ENCODE measurements at regions of chr4 and their contacts with region 1.

Region 1: DNA sequence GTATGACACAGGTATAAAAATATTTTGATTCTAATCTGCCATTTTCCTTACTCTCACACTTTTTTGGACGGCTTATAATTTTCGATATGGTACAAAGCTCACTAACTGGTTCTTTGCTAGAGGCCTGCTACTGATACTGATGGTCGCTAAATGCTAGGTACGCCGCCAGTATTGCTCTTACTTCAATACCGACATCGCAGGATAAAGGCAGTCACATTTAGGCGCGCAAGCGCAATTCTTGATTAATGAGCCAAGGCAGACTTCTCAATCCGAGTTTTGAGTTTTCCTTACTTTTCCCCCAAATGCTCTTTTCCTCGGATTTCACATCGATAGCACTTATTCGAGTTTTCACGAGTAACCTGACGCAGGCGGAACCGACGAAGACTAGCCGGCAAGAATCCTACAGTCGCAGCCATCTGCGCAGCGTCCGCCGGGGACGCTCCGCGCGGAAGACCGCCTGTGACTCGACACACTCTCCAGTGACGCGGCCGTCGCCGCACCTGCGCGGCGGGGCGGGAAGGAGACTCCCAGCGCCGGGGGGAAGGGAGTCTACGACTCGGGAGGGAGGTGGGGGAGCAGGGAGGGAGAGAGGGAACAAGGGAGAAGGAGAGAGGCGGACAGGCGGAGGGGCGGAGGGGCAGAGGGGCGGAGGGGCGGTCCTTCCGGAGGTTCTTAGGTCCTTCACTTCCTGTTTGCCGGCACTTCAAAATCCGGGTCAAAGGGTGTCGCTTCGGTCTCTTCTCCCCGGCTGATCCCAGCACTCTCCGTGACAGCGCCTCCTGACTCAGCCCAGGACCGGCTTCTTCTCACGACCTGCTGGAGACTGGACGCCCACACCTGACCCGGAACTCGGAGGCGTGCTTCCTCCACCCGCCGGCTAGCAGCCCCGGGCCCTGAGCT is at the start of gene USP38:
- DNase-seq: peak; percentile 91 to 96
- ATAC-seq: peak; percentile 89 to 96 (median 92)
- H3K4me3 ChIP-seq: peak within 1 kb of the TSS; percentile 96
- H3K27ac ChIP-seq: peak within 1 kb of the TSS; percentile 98
- H3K4me1 ChIP-seq: peaks cover 22% of the 10 kb centered on the region
- H3K27me3 ChIP-seq: no peaks in the 10 kb centered on the region
- CTCF ChIP-seq: no peak
- total RNA-seq, gene USP38: 39.9 to 105 (median 65.7) TPM

Region 2: GRCh38 chr4:142719854-142720541 is 464.5 kb before region 1 on chr4:
- intact Hi-C with region 1: no loop called
- DNase-seq: no peak
- ATAC-seq: no peak
- H3K4me3 ChIP-seq: no peak overlapping the region
- H3K27ac ChIP-seq: no peak overlapping the region
- H3K4me1 ChIP-seq: no peaks in the 10 kb centered on the region
- H3K27me3 ChIP-seq: no peaks in the 10 kb centered on the region
- CTCF ChIP-seq: peak; percentile 42

Region 3: DNA sequence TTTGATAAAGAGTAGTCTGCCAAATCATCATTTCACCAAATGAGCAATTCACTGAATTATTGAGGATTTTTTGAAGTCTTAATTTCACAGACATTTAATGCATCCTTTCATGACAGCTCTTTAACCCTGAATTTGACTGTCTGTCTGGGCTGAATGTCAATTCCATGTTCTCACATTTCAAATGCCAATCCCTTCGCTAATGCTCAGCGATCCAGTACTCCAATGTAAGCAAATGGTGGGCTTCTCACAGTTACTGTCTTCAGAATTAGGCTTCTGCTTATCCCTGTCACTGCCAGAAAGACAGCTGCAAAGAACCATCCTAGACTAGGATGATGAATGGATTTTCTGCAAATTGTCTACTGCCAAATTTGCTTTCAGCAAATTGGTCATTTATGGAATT is 35.9 kb before region 1 on chr4:
- intact Hi-C with region 1: no loop called
- DNase-seq: no peak
- ATAC-seq: no peak
- H3K4me3 ChIP-seq: no peak overlapping the region
- H3K27ac ChIP-seq: no peak overlapping the region
- H3K4me1 ChIP-seq: no peaks in the 10 kb centered on the region
- H3K27me3 ChIP-seq: no peaks in the 10 kb centered on the region
- CTCF ChIP-seq: no peak

Region 4: DNA sequence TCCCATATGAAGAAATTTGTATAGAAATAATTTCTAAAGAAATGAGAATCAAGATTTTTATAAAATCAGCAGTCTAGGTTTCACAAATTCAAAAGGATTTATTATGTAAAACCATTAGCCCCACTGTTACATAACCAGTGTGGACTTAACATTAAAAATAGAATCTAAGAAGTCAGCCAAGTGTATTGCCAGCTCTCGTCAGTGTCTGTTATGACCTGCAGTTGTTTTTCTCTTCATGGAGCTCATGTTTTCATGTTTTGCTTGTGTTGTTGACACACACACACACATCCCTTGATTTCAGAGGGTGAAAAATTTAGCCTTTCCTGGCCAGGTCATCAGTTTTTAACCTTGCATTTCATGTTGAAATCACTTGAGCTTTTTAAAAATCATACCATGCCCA is 39.8 kb after region 1 on chr4:
- intact Hi-C with region 1: no loop called
- DNase-seq: no peak
- ATAC-seq: peak; percentile 77 to 89 (median 85)
- H3K4me3 ChIP-seq: peak overlapping the region; percentile 12
- H3K27ac ChIP-seq: peak overlapping the region; percentile 67
- H3K4me1 ChIP-seq: peaks cover 33% of the 10 kb centered on the region
- H3K27me3 ChIP-seq: no peaks in the 10 kb centered on the region
- CTCF ChIP-seq: no peak

Region 5: DNA sequence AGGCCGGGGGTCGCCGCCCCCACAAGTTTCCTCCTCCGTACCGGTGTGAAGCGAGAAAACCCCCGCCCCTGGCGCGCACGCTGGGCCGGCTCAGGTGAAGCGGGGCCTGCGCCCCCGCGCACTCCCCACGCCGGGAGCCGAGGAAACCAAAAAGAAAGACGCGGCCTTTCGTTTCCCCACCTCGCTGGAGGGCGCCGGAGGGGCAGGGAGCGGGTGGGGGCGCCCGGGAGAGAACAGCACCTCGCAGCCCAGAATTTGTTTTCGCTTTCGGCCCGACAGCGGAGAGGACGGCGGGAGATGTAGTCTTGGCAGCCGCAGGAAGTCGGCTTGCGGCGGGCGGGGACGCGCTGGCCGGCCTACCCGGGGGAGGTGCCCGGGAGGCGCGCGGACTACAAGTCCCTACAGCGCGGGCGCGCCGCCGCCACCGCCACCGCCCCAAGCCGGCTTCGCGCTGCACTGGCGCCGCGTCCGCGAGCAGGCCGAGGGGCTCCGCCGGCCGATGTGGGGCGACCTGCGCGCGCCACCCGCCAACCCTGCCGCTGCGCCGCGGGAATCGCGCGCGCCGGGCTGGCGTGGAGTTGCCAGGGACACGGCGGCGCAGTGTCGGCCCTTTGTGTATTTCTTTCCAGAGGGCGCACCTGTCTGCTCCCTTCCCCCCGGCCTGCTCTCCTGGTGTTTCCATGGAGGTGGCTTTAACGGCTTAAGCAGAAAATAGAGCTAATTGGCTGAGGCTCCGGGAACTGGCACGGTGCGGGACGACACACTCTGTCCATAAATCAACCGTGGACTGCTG is 1996.0 kb after region 1 on chr4 and contains the start of gene OTUD4:
- intact Hi-C with region 1: loop called in 1 of 2 experiments (anchors 10 kb)
- DNase-seq: peak; percentile 97 to 98
- ATAC-seq: peak; percentile 81 to 90 (median 84)
- H3K4me3 ChIP-seq: peak within 1 kb of the TSS; percentile 83
- H3K27ac ChIP-seq: peak within 1 kb of the TSS; percentile 97
- H3K4me1 ChIP-seq: peaks cover 40% of the 10 kb centered on the region
- H3K27me3 ChIP-seq: no peaks in the 10 kb centered on the region
- CTCF ChIP-seq: peak; percentile 8
- total RNA-seq, gene OTUD4: 51.6 to 88.0 (median 56.5) TPM